CD4-positive, alpha-beta memory T cell (primary cell): ENCODE measurements at regions of chr18 and their contacts with region 1.

Region 1: DNA sequence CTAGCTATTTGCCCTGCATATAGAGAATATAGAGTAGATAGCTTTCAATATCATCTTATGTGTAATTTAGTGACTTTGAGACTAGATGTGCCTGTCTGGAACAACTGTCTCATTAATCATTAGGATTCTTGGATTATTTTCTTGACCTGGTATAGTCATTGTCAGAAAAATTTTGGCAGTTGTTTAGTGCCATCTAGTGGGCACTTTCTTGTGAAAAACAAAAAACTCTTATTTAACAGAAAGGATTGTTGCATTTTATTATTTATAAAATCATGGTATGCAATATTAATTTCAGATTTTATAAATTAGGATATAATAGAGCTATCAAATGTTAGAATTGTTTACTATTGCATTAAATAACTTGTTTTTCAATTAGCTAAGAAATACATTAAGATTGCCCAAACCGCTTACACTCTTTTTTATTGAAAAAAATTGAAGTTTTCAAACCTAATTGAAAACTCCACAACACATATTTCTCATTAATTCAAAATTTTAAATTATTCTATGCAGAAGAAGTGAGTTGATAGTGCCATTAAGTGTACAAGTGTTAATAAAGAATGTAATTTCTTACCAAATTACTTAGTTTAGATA is 80.3 kb downstream of the DYNAP start:
- DNase-seq: peak in 4 of 5 donors; percentile 14 to 30 (median 16)
- H3K4me3 ChIP-seq: no peak overlapping the region
- H3K4me3 Mint-ChIP-seq: no peak overlapping the region
- H3K27ac ChIP-seq: no peak overlapping the region
- H3K27ac Mint-ChIP-seq: no peak overlapping the region
- H3K4me1 ChIP-seq: no peaks in the 10 kb centered on the region
- H3K4me1 Mint-ChIP-seq: no peaks in the 10 kb centered on the region
- H3K27me3 ChIP-seq: no peaks in the 10 kb centered on the region
- H3K27me3 Mint-ChIP-seq: peaks cover 4% of the 10 kb centered on the region in 2 donors

Region 2: GRCh38 chr18:53909668-53910067 is 761.7 kb before region 1 on chr18:
- CTCF ChIA-PET with region 1: interaction called, 4 read pairs
- POLR2A ChIA-PET with region 1: no interaction called
- intact Hi-C with region 1: loop called (anchors 5 kb)
- DNase-seq: peak in 1 of 5 donors; percentile 1
- H3K4me3 ChIP-seq: no peak overlapping the region
- H3K4me3 Mint-ChIP-seq: no peak overlapping the region
- H3K27ac ChIP-seq: no peak overlapping the region
- H3K27ac Mint-ChIP-seq: no peak overlapping the region
- H3K4me1 ChIP-seq: no peaks in the 10 kb centered on the region
- H3K4me1 Mint-ChIP-seq: no peaks in the 10 kb centered on the region
- H3K27me3 ChIP-seq: no peaks in the 10 kb centered on the region
- H3K27me3 Mint-ChIP-seq: peaks cover 2 to 6% of the 10 kb centered on the region in 2 donors

Region 3: DNA sequence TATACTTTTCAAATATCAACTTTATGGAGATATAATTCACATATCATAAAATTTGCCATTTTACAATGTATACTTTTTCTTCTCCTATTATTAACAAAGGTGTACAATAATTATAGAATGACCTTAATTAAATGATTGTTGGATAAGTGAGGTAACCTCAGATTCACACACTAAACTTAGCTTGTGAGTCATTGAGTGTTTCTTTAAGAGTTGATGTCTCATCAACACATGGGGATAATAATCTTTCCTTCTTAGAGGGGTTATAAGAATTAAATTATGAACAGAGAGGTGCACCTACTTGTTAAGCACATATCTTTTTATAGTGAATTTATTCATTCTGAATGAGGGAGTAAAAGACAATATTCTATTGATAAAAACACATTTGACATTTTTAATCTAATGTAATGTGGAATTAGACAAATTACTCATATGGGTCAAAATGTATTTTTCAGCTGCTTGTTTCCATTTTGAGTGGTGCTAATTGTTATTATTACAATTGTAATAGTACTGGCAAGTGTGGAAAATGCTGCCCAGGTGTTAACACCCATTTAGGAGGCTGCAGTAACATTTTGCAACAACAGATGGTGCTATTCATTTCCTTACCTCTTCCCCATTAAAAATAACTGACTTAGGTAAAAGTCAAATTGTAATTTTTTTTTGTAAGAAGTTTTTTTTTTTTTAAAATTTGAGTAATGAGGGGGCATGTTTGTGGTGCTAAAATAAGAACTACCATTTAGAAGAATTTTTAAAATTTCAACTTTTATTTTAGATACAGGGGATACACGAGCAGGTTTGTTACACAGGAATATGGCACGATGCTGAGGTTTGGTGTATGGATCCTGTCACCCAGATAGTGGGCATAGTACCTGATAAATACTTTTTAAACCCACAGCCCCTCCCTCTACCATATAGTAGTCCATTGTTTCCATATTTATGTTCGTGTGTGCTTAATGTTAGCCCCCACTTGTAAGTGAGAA is 112.5 kb before region 1 on chr18:
- CTCF ChIA-PET with region 1: no interaction called
- POLR2A ChIA-PET with region 1: no interaction called
- intact Hi-C with region 1: loop called (anchors 5 kb)
- DNase-seq: peak in 2 of 5 donors; percentile 10 to 16
- H3K4me3 ChIP-seq: no peak overlapping the region
- H3K4me3 Mint-ChIP-seq: no peak overlapping the region
- H3K27ac ChIP-seq: no peak overlapping the region
- H3K27ac Mint-ChIP-seq: no peak overlapping the region
- H3K4me1 ChIP-seq: no peaks in the 10 kb centered on the region
- H3K4me1 Mint-ChIP-seq: no peaks in the 10 kb centered on the region
- H3K27me3 ChIP-seq: no peaks in the 10 kb centered on the region
- H3K27me3 Mint-ChIP-seq: peaks cover 0 to 2% of the 10 kb centered on the region in 2 donors